PC-9 (cell line): ENCODE measurements at regions of chr13 and their contacts with region 1.

Region 1: GRCh38 chr13:41931337-41931736 is 29.6 kb downstream of the VWA8 start:
- DNase-seq: no peak
- H3K4me3 ChIP-seq: no peak overlapping the region
- H3K27ac ChIP-seq: no peak overlapping the region
- H3K4me1 ChIP-seq: no peaks in the 10 kb centered on the region
- H3K27me3 ChIP-seq: no peaks in the 10 kb centered on the region
- CTCF ChIP-seq: no peak

Region 2: DNA sequence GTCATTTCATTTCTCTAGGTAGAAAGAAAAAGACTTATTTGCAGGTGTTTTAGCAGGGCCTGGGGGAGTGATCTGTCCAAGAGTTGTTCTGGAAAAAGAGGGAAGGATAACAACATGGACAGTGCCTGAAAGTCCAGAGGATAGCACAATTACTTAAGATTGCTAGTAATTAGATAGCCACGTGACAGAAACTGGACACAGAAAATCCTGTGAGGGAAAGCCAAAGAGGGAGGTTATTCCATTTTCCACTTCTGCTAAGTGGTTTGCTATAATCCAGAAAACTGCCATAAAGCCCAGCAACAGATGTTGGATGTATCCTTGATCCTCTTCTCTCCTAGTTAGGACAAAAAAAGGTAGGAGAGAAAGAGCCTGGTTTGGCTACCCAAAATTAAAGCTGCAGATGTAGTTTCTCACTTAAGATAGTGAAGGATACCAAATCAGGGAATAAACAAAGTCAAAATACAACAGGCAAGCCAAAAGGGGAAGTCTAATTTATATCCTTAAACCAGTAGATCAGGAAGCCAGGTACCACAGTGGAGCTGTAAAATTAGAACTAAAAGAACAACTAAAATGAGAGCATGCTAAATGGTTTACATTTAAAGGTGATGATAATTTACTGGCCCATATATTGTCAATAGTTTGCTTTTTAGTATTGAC is 110.6 kb before region 1 on chr13:
- CTCF ChIA-PET with region 1: no interaction called
- POLR2A ChIA-PET with region 1: no interaction called
- intact Hi-C with region 1: no loop called
- DNase-seq: no peak
- H3K4me3 ChIP-seq: no peak overlapping the region
- H3K27ac ChIP-seq: no peak overlapping the region
- H3K4me1 ChIP-seq: no peaks in the 10 kb centered on the region
- H3K27me3 ChIP-seq: no peaks in the 10 kb centered on the region
- CTCF ChIP-seq: no peak

Region 3: DNA sequence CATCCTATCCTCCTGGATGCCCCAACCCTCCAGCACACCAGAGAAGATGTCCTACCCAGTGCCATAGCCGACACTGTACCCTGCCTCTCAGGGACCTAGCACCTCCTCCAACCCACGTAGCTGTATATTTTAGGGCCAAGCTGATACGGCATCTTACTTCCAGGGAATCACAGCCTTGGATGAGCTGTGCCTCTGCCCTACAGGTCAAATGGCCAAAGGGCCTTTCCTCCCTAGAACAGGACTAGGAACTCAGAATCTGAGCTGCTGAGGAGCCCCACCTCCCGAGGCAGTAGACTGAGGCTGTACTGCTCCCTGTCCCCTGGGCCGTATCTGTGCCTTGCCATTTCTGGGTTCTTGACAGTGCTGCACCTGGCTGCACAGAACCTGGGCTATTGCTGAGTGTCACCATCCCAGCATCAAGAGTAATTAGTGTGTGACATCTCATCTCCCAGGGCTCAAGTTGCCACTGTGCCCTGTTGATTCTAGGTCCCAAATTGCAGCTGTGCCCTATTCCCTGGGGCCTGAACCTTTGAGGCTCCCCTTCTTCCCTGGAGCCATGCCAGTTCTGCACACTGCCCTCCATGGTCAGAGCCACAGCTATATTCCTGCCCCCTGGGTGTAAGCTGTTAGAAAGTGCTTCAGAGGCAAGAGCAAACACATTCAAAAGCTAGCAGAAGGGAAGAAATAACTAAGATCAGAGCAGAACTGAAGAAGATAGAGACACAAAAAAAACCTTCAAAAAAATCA is 11.4 kb before region 1 on chr13:
- CTCF ChIA-PET with region 1: no interaction called
- POLR2A ChIA-PET with region 1: interaction called, 16 read pairs
- intact Hi-C with region 1: no loop called
- DNase-seq: no peak
- H3K4me3 ChIP-seq: no peak overlapping the region
- H3K27ac ChIP-seq: no peak overlapping the region
- H3K4me1 ChIP-seq: no peaks in the 10 kb centered on the region
- H3K27me3 ChIP-seq: no peaks in the 10 kb centered on the region
- CTCF ChIP-seq: no peak